ENCODE measurements at regions of chr7 and their contacts with region 1.

Region 1: DNA sequence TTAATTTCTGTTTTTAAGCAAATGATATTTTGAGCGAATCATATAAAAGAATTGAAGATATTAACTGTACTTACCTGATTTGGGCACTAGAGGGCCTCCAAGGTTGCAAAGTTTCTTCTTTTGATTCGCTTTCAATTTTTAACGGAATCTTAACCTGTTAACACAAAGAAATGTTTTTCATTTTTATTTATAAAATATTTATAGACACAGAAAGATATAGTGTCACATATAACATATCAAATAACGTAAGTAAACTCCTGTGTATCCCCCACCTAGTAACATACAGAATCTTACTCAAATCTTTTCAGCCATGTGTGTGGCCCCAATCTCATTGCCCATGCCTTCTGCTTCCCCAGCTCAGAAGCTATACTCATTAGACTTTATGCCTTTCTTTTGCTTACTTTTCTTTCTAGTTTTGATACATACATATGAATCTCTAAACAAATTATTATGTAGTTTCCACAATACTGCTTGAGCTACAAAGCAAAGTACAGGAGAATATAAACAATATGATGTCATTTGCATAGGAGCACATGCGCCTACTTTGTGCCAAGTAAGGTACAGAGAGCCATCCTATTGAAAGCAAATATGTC is 49.5 kb upstream of the ZPBP start:
- DNase-seq: peak; percentile 55
- H3K4me3 ChIP-seq: no peak overlapping the region
- H3K27ac ChIP-seq: no peak overlapping the region
- H3K4me1 ChIP-seq: no peaks in the 10 kb centered on the region
- H3K27me3 ChIP-seq: no peaks in the 10 kb centered on the region

Region 2: DNA sequence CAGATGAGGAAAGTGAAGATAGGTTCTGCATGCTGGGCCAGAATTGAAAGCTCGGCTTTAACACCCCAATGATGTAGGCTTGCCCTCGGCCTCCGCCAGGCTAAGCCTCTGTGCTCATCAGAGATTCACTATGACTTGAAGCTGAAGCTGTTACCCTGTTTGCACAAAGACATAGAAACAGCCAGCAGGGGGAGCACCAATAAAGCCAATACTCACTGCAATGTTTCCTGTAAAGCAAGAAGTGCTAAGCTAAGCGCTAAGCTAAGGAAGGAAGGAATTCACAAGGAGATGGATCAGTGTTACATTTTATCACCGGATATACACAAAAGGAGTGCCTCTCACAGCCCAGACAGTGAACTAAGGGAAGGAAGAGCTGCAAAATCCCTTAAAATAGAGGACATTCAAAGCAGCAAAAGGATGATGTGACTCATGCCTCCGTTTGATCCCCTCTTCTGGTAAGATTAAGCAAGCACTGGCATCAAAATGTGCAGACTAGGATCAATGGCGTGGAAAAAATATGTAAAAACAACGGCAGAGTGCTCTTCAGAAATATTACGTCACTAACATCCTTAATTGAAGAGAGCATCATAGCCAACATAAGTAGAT is 1020.3 kb after region 1 on chr7:
- in situ Hi-C with region 1: loop called (anchors 25 kb)
- DNase-seq: peak; percentile 83
- H3K4me3 ChIP-seq: no peak overlapping the region
- H3K27ac ChIP-seq: no peak overlapping the region
- H3K4me1 ChIP-seq: no peaks in the 10 kb centered on the region
- H3K27me3 ChIP-seq: 0 out of 2 replicates have a peak, but pooled peaks cover 12% of the 10 kb centered on the region

Measured in GM23248 (cell line).